Lower leg skin (tissue), 4 donors: ENCODE measurements at regions of chr13 and their contacts with region 1.

Region 1: GRCh38 chr13:45047394-45048310 is 58.3 kb downstream of the GPALPP1 start:
- DNase-seq: peak; percentile 80 to 93
- H3K4me3 ChIP-seq: no peak overlapping the region
- CTCF ChIP-seq: peak in 1 of 3 donors; percentile 72
- POLR2A ChIP-seq: no peak

Region 2: DNA sequence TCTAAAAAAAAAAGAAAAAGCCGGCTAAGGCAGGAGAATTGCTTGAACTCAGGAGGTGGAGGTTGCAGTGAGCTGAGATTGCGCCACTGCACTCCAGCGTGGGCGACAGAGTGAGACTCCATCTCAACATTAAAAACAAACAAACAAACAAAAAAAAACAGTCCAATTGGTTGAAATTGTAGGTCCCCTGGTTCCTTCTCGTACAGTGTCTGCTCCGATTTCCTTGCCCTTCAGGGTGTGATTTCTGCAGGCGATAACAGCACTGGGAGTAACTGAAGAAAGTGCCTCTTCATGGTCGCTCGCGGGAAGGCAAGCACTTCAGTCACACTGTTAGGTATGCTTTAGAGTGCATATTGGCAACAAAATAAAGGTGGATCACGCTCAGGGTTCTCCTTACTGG is 253.6 kb after region 1 on chr13:
- intact Hi-C with region 1: loop called (anchors 10 kb)
- DNase-seq: no peak
- H3K4me3 ChIP-seq: no peak overlapping the region
- CTCF ChIP-seq: no peak
- POLR2A ChIP-seq: no peak